OCI-LY7 (cell line): ENCODE measurements at regions of chr12 and their contacts with region 1.

Region 1: GRCh38 chr12:24895612-24896011 is 53.3 kb downstream of the BCAT1 start:
- DNase-seq: no peak
- H3K4me3 ChIP-seq: no peak overlapping the region
- H3K27ac ChIP-seq: no peak overlapping the region
- H3K4me1 ChIP-seq: no peaks in the 10 kb centered on the region
- CTCF ChIP-seq: no peak

Region 2: DNA sequence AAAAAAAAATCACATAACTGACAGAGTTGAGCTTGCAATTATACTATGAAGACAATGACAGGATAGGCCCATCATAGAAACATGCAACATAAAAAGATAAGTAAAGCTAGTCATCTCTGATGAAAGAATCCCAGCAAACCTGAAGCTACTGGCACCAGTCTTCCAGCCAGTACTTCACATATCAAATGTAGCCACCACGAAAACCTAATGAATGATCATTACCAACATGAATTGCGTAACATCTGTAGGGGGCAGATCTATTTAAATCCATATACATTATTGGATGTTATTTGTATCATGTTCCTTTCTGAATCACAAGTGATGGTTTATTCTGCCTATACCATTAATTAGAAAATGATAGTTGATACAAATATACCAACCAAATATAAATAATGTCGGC is 20.6 kb before region 1 on chr12:
- CTCF ChIA-PET with region 1: no interaction called
- POLR2A ChIA-PET with region 1: interaction called, 12 read pairs
- intact Hi-C with region 1: no loop called
- DNase-seq: no peak
- H3K4me3 ChIP-seq: no peak overlapping the region
- H3K27ac ChIP-seq: no peak overlapping the region
- H3K4me1 ChIP-seq: no peaks in the 10 kb centered on the region
- CTCF ChIP-seq: no peak

Region 3: DNA sequence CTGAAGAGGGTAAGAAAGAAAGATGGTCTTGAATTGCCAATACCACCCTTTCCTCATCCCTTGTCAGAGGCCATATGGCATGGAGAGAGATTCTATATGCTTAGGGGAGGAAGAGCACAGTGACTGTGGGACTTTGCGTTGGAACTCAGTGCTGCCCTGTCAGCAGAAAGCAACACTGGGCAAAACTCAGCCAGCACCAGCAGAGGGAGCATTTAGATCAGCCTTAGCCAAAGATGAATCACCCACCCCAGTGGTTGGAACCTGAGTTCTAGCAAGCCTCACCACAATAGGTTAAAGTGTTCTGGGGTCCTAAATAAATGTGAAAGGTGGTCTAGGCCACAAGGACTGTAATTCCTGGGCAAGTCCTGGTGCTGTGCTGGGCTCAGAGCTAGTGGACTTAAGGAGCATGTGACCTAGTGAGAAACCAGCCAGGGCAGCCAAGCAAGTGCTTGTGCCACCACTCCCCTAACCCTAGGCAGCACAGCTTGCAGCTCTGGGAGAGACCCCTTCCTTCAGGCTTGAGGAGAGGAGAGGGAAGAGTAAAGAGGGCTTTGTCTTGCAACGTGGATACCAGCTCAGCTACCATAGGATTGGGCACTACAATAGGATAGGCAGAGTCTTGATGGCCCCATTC is 64.7 kb after region 1 on chr12:
- CTCF ChIA-PET with region 1: no interaction called
- POLR2A ChIA-PET with region 1: no interaction called
- intact Hi-C with region 1: no loop called
- DNase-seq: peak; percentile 72
- H3K4me3 ChIP-seq: no peak overlapping the region
- H3K27ac ChIP-seq: no peak overlapping the region
- H3K4me1 ChIP-seq: no peaks in the 10 kb centered on the region
- CTCF ChIP-seq: peak; percentile 91